A549 (cell line): ENCODE measurements at regions of chr5 and their contacts with region 1.

Region 1: GRCh38 chr5:73902327-73903051 is 276.5 kb downstream of the ARHGEF28 start:
- DNase-seq: peak; percentile 41 to 68
- ATAC-seq: peak in 1 of 2 experiments; percentile 23; a peak in 1 of 6 replicates
- H3K4me3 ChIP-seq: no peak overlapping the region
- H3K27ac ChIP-seq: peak overlapping the region; percentile 50 to 81; a peak in 4 of 6 replicates
- H3K4me1 ChIP-seq: peaks cover 28% of the 10 kb centered on the region
- CTCF ChIP-seq: peak; percentile 90
- EP300 ChIP-seq: no peak
- POLR2A ChIP-seq: no peak
- RAD21 ChIP-seq: peak; percentile 83 to 90

Region 2: GRCh38 chr5:73918791-73919221 is 16.3 kb after region 1 on chr5:
- CTCF ChIA-PET with region 1: interaction called, 27 read pairs
- POLR2A ChIA-PET with region 1: no interaction called
- DNase-seq: no peak
- ATAC-seq: no peak
- H3K4me3 ChIP-seq: no peak overlapping the region
- H3K27ac ChIP-seq: no peak overlapping the region
- H3K4me1 ChIP-seq: no peaks in the 10 kb centered on the region
- CTCF ChIP-seq: no peak
- EP300 ChIP-seq: no peak
- POLR2A ChIP-seq: no peak
- RAD21 ChIP-seq: no peak

Region 3: GRCh38 chr5:73938280-73938937 is 35.9 kb after region 1 on chr5:
- CTCF ChIA-PET with region 1: interaction called, 13 read pairs
- POLR2A ChIA-PET with region 1: no interaction called
- DNase-seq: peak; percentile 28 to 66
- ATAC-seq: peak; percentile 76 to 81; a peak in 5 of 6 replicates
- H3K4me3 ChIP-seq: no peak overlapping the region
- H3K27ac ChIP-seq: peak overlapping the region in 1 of 2 experiments; percentile 45; a peak in 3 of 6 replicates
- H3K4me1 ChIP-seq: peaks cover 18% of the 10 kb centered on the region; the same call in 2 of the 3 replicates
- CTCF ChIP-seq: no peak
- EP300 ChIP-seq: no peak
- POLR2A ChIP-seq: no peak
- RAD21 ChIP-seq: no peak

Region 4: DNA sequence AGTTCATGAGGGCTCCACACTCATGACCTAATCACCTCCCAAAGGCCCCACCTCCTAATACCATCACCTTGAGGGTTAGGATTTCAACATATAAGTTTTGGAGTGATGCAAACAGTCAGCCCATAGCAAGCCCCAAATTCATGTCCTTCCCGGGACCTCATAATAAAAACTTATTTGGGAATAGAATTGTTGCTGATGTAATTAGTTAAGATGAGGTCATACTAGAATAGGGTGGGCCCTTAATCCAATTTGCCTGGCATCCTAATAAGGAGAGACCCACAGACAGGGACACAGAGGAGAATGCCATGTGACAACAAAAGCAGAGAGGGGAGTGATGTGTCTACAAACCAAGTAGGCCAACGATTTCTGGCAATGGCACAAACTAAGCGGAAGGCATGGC is 70.6 kb after region 1 on chr5:
- CTCF ChIA-PET with region 1: no interaction called
- POLR2A ChIA-PET with region 1: no interaction called
- DNase-seq: no peak
- ATAC-seq: no peak
- H3K4me3 ChIP-seq: no peak overlapping the region
- H3K27ac ChIP-seq: no peak overlapping the region
- H3K4me1 ChIP-seq: no peaks in the 10 kb centered on the region
- CTCF ChIP-seq: no peak
- EP300 ChIP-seq: no peak
- POLR2A ChIP-seq: no peak
- RAD21 ChIP-seq: no peak

Region 5: GRCh38 chr5:74648835-74649293 is 746.4 kb after region 1 on chr5:
- CTCF ChIA-PET with region 1: interaction called, 141 read pairs
- POLR2A ChIA-PET with region 1: interaction called, 3 read pairs
- DNase-seq: peak; percentile 65 to 77
- ATAC-seq: peak; percentile 88 to 96
- H3K4me3 ChIP-seq: no peak overlapping the region
- H3K27ac ChIP-seq: peak overlapping the region in 1 of 2 experiments; percentile 43; a peak in 3 of 6 replicates
- H3K4me1 ChIP-seq: peaks cover 16% of the 10 kb centered on the region
- CTCF ChIP-seq: peak; percentile 95
- EP300 ChIP-seq: no peak
- POLR2A ChIP-seq: no peak
- RAD21 ChIP-seq: peak; percentile 95 to 97

Region 6: DNA sequence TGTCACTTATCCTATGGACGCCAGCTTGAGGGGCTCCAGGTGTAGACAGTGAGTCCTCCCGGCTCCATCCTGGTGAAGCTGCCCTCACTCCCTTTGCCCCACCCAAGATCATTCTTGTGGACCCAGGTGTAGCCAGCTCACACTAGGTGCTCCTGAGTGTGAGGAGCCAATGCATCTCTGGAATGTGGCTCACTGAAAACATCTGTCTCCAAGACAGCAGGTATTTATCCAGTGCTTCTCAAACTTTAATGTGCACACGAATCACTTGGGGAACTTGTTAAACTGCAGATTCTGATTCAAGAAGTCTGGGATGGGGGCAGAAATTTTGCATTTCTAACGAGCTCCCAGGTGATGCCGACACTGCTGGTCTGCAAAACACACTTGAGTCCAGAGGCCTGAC is 751.5 kb after region 1 on chr5:
- CTCF ChIA-PET with region 1: interaction called, 47 read pairs
- POLR2A ChIA-PET with region 1: no interaction called
- DNase-seq: no peak
- ATAC-seq: no peak
- H3K4me3 ChIP-seq: no peak overlapping the region
- H3K27ac ChIP-seq: no peak overlapping the region
- H3K4me1 ChIP-seq: no peaks in the 10 kb centered on the region; the same call in 2 of the 3 replicates
- CTCF ChIP-seq: no peak
- EP300 ChIP-seq: no peak
- POLR2A ChIP-seq: no peak
- RAD21 ChIP-seq: no peak

Region 7: GRCh38 chr5:74660140-74660539 is 757.7 kb after region 1 on chr5:
- CTCF ChIA-PET with region 1: interaction called, 23 read pairs
- POLR2A ChIA-PET with region 1: no interaction called
- DNase-seq: no peak
- ATAC-seq: no peak
- H3K4me3 ChIP-seq: no peak overlapping the region
- H3K27ac ChIP-seq: no peak overlapping the region
- H3K4me1 ChIP-seq: no peaks in the 10 kb centered on the region
- CTCF ChIP-seq: no peak
- EP300 ChIP-seq: no peak
- POLR2A ChIP-seq: no peak
- RAD21 ChIP-seq: no peak

Region 8: GRCh38 chr5:74945561-74946165 is 1043.2 kb after region 1 on chr5:
- CTCF ChIA-PET with region 1: no interaction called
- POLR2A ChIA-PET with region 1: no interaction called
- DNase-seq: no peak
- ATAC-seq: no peak
- H3K4me3 ChIP-seq: no peak overlapping the region
- H3K27ac ChIP-seq: no peak overlapping the region
- H3K4me1 ChIP-seq: peaks cover 22% of the 10 kb centered on the region; the same call in 2 of the 3 replicates
- CTCF ChIP-seq: no peak
- EP300 ChIP-seq: no peak
- POLR2A ChIP-seq: no peak
- RAD21 ChIP-seq: no peak